Calu3 (cell line): ENCODE measurements at regions of chr14 and their contacts with region 1.

Region 1: DNA sequence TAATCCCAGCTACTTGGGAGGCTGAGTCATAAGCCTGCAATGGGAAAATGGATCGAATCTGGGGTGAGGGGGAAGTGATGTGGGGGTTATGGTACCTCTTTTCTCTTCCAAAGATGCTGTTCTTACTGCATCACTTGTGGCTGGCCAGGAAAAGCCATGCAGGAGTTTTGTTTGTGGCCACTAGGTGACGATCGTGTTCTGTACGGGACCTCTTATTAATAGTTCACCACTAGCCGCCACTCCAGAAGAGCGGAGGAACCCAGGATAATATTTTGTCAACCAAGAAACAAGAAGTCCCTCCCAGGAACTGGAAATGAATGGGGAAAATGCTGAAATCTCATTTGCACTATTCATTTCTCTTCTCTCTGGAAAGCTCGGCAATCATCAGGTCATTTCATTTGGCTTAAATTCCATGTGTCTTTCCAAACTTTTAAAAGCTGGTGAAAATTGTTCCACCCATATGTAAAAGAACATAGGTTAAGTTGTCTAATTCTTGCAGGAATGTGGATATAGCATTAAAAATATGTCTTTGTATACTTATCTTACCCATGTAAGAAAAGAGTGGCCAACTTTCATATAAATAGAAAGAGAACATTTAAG is 8.9 kb downstream of the GPR65 start:
- DNase-seq: peak; percentile 72
- H3K4me3 Mint-ChIP-seq: no peak overlapping the region
- H3K27ac Mint-ChIP-seq: no peak overlapping the region
- H3K4me1 Mint-ChIP-seq: no peaks in the 10 kb centered on the region
- H3K27me3 Mint-ChIP-seq: no peaks in the 10 kb centered on the region
- CTCF ChIP-seq: peak; percentile 55

Region 2: DNA sequence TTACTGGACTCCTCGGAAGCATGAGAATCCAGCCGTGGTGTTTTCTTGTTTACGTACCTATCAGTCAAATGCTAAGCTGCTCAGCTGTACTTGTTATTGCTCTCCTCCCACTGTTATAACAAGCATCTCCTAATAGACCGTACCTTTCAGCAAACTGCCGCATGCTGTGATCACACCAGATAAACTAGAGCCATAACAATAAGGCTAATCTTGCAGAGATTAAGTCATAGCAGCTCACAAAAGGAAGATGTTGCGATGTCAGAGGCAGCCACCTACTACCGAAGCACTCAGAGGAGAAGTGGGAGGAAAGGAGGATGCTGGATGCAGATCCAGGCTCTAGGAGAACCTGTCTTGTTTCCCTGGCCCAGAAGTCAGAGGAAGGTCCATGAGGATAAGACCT is 216.8 kb before region 1 on chr14:
- CTCF ChIA-PET with region 1: no interaction called
- intact Hi-C with region 1: no loop called
- DNase-seq: no peak
- H3K4me3 Mint-ChIP-seq: no peak overlapping the region
- H3K27ac Mint-ChIP-seq: no peak overlapping the region
- H3K4me1 Mint-ChIP-seq: no peaks in the 10 kb centered on the region
- H3K27me3 Mint-ChIP-seq: no peaks in the 10 kb centered on the region
- CTCF ChIP-seq: no peak

Region 3: DNA sequence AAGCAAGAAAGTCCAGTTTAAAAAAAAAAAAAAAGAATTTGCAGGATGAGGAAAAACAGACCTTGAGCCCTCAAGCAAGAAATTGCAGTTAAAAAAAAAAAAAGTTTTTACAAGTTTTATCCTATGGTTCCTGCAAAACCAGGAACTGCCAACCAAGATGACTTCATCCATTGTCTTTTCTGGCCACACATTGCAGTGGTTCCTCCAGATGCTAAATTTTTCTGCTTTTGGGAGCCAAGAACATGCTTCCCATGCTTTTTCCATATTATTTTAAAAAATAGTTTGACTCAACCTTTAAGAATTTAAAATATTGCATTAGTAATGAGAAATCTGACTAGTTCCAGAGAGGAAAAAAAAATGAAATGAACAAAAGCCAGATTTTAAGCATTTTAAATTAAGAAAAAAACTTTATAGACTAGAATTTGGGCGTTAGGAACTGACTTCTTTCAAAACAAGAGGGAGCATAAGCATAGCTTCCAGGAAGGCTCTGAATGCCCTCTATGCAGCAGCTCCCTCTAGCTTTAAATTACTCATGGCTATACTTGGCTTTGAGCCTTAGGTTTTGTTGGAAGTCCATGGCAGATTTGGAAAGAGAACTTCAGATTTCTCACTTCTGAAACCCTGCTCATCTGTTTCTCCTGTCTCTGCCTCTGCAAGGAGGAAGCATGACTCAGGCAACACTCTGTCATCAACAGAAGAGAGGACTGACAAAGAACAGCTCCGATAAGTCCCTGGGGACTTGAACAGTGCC is 115.6 kb after region 1 on chr14:
- CTCF ChIA-PET with region 1: interaction called, 3 read pairs
- intact Hi-C with region 1: loop called (anchors 2 kb)
- DNase-seq: no peak
- H3K4me3 Mint-ChIP-seq: no peak overlapping the region
- H3K27ac Mint-ChIP-seq: no peak overlapping the region
- H3K4me1 Mint-ChIP-seq: no peaks in the 10 kb centered on the region
- H3K27me3 Mint-ChIP-seq: peaks cover 14% of the 10 kb centered on the region
- CTCF ChIP-seq: no peak

Region 4: DNA sequence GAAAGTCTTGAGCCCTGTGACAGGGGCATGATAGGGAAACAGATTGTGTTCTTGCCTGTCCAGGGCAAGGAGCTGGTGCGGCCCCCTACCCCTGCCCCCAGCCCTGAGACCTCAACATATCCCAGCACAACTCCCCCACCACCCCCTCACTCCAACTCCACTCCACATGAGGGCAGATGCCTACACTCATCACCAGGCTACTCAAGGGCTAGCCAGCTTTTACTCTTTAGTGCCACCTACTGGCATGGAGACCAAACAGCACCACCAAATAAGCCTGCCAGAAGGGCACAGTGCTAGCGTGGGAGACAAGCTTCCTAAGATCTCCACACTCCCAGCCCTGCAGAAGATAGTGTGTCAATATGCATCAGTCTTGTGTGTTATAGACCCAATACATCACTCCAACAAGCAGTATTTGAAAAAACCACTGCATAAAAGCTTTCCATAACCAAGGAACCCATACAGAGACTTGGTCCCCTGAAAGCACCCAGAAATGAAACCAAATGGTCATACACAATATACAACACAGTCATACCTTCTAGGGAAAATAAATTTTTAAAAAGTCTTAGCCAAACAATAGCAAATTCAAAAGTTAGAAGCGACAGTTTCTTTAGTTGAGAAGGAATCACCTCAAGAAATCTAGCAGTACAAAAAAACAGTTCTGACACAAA is 154.8 kb after region 1 on chr14:
- CTCF ChIA-PET with region 1: interaction called, 14 read pairs
- intact Hi-C with region 1: loop called (anchors 1 kb)
- DNase-seq: peak; percentile 35
- H3K4me3 Mint-ChIP-seq: no peak overlapping the region
- H3K27ac Mint-ChIP-seq: no peak overlapping the region
- H3K4me1 Mint-ChIP-seq: peaks cover 25% of the 10 kb centered on the region
- H3K27me3 Mint-ChIP-seq: peaks cover 8% of the 10 kb centered on the region
- CTCF ChIP-seq: peak; percentile 39

Region 5: GRCh38 chr14:88233915-88234314 is 220.1 kb after region 1 on chr14:
- CTCF ChIA-PET with region 1: interaction called, 3 read pairs
- intact Hi-C with region 1: loop called (anchors 1 kb)
- DNase-seq: peak; percentile 24
- H3K4me3 Mint-ChIP-seq: no peak overlapping the region
- H3K27ac Mint-ChIP-seq: no peak overlapping the region
- H3K4me1 Mint-ChIP-seq: no peaks in the 10 kb centered on the region
- H3K27me3 Mint-ChIP-seq: peaks cover 10% of the 10 kb centered on the region
- CTCF ChIP-seq: peak; percentile 17

Region 6: DNA sequence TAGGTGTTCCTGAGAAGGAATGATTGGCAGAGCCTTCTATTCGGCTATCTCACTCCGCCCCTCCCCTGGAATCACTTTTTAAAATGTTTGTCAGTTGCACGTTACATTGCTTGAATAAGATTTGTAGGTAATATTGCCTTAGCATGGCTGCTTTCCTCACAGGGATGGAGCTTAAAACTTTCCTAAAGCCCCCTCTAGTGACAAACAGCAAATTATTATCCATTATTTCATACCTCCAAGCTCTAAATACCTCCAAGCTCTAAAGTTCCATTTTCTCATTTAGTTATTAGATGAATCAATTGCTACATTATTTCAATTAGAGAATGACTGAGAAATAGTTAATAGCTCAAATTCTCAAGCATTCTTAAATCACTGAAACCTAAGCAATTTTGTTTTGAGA is 366.6 kb after region 1 on chr14:
- CTCF ChIA-PET with region 1: interaction called, 9 read pairs
- intact Hi-C with region 1: loop called (anchors 2 kb)
- DNase-seq: no peak
- H3K4me3 Mint-ChIP-seq: no peak overlapping the region
- H3K27ac Mint-ChIP-seq: no peak overlapping the region
- H3K4me1 Mint-ChIP-seq: no peaks in the 10 kb centered on the region
- H3K27me3 Mint-ChIP-seq: no peaks in the 10 kb centered on the region
- CTCF ChIP-seq: no peak